ENCODE measurements at regions of chr5 and their contacts with region 1.

Region 1: GRCh38 chr5:36739751-36740221 is 133.4 kb downstream of the SLC1A3 start:
- DNase-seq: peak; percentile 68 to 95
- H3K4me3 ChIP-seq: no peak overlapping the region
- H3K27ac ChIP-seq: no peak overlapping the region
- H3K4me1 ChIP-seq: peaks cover 7 to 10% (median 9%) of the 10 kb centered on the region in 4 experiments; a peak in 6 of 7 replicates
- H3K27me3 ChIP-seq: no peaks in the 10 kb centered on the region
- CTCF ChIP-seq: peak; percentile 46 to 95 (median 91)
- EP300 ChIP-seq: no peak
- POLR2A ChIP-seq: no peak
- RAD21 ChIP-seq: peak; percentile 83 to 88

Region 2: GRCh38 chr5:36751886-36752285 is 12.1 kb after region 1 on chr5:
- CTCF ChIA-PET with region 1: interaction called, 43 read pairs
- POLR2A ChIA-PET with region 1: interaction called, 14 read pairs
- DNase-seq: no peak
- H3K4me3 ChIP-seq: no peak overlapping the region
- H3K27ac ChIP-seq: no peak overlapping the region
- H3K4me1 ChIP-seq: peaks cover 0 to 2% (median 0%) of the 10 kb centered on the region in 4 experiments; a peak in 2 of 7 replicates
- H3K27me3 ChIP-seq: no peaks in the 10 kb centered on the region
- CTCF ChIP-seq: peak; percentile 56 to 73 (median 70)
- EP300 ChIP-seq: no peak
- POLR2A ChIP-seq: no peak
- RAD21 ChIP-seq: peak; percentile 55 to 66

Region 3: DNA sequence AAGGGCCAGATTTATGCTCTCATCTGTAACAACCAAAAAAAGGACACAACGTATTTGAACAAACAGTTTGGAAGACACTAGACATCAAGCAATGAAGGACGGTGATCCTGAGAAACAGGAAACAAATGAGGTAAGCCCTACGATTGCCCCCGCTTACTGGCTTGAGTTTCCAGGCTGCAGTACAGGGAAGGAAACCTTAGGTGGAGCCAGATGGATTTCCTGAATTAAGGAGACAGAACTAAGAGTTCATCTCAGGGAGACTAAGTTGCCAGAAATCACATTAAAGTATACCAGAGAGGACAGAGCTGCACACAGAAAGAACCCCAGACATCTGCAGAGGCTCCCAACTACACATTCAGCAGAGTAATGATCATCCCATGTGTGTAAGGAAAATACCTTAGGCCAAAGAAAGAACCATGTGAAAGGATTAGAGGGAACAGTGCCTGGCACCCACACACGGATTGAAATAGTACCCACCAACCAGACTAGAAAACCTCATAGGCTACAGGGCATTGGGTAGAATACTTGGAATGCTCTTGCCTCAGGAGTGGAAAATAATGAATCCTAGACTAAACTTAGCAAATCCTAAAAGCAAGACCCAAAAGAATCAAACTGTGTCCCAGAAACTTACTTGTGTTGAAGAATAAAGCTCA is 37.4 kb after region 1 on chr5:
- CTCF ChIA-PET with region 1: interaction called, 13 read pairs
- POLR2A ChIA-PET with region 1: interaction called, 3 read pairs
- DNase-seq: peak in 1 of 2 experiments; percentile 5
- H3K4me3 ChIP-seq: no peak overlapping the region
- H3K27ac ChIP-seq: no peak overlapping the region
- H3K4me1 ChIP-seq: no peaks in the 10 kb centered on the region
- H3K27me3 ChIP-seq: no peaks in the 10 kb centered on the region
- CTCF ChIP-seq: peak; percentile 25 to 73 (median 56)
- EP300 ChIP-seq: no peak
- POLR2A ChIP-seq: no peak
- RAD21 ChIP-seq: peak; percentile 57 to 64

Region 4: DNA sequence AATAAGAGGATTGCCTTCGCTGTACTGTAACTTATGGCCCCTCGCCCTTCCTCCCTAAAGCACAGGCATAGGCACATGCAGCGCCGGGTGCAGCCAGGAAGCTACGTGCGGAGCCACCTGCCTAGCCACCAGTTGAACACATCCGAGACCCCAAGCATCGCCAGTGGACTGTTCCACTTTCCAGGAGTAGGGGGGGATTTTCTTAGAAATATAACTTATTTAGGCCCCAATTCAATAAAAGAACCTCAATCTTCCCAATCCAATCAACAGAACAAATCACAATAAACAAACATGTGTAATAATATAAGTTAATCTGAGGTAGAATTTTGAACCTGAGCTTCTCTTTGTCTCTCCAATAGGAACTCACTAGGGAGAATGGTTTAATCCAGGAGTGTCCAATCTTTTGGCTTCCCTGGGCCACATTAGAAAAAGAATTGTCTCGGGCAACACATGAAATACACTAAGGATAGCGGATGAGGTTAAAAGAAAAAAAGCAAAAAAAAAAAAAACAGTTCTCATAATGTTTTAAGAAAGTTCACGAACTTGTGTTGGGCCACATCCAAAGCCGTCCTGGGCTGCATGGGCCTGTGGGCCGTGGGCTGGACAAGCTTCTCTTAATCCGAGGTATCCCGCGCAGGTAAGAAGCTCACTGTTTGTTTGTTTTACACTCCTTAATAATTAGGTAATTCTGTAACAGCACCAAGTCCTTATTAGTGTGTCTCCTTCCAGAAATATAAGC is 114.8 kb after region 1 on chr5:
- CTCF ChIA-PET with region 1: interaction called, 22 read pairs
- POLR2A ChIA-PET with region 1: interaction called, 8 read pairs
- DNase-seq: no peak
- H3K4me3 ChIP-seq: peak overlapping the region in 1 of 4 experiments; percentile 6; a peak in 1 of 8 replicates
- H3K27ac ChIP-seq: no peak overlapping the region; the same call in 1 of the 2 replicates
- H3K4me1 ChIP-seq: 0 out of 7 replicates have a peak, but pooled peaks cover 0 to 4% (median 0%) of the 10 kb centered on the region in 4 experiments
- H3K27me3 ChIP-seq: no peaks in the 10 kb centered on the region
- CTCF ChIP-seq: no peak
- EP300 ChIP-seq: peak in 1 of 2 experiments; percentile 99; a peak in 2 of 3 replicates
- POLR2A ChIP-seq: no peak
- RAD21 ChIP-seq: no peak

Region 5: DNA sequence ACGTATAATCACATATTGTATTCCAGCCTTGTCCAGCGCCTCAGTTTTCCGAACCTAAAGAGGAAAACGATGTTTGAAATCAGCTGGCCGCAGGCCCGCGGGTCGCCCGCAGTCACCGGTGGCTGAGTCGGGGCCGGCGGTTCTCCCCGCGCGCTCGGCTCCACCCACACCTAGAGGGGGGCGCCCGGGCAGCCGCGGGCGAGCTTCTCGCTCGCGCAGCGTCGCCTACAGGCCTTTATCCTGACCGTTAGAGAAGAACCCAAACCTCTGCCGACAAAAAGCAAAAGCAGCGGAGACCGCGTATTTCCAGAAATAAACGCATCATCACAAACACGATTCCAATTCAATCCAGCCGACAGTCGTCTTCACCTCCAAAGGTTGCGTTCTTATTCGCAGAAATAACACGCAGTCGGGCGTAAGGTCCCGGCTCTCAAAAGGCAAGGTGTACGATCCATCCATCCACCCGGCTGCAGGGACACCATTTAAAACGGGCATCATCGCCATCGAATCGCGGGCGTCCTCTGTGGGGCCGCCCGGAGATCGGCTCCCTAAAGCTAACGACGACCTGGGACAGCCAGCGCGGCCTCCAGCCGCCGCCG is 136.1 kb after region 1 on chr5:
- CTCF ChIA-PET with region 1: interaction called, 121 read pairs
- POLR2A ChIA-PET with region 1: interaction called, 27 read pairs
- DNase-seq: peak in 1 of 2 experiments; percentile 68
- H3K4me3 ChIP-seq: peak overlapping the region; percentile 73 to 96 (median 94)
- H3K27ac ChIP-seq: peak overlapping the region; percentile 71
- H3K4me1 ChIP-seq: peaks cover 0 to 4% (median 0%) of the 10 kb centered on the region in 4 experiments; a peak in 3 of 7 replicates
- H3K27me3 ChIP-seq: no peaks in the 10 kb centered on the region
- CTCF ChIP-seq: peak; percentile 38 to 46 (median 44); a peak in 3 of 4 replicates
- EP300 ChIP-seq: no peak
- POLR2A ChIP-seq: no peak
- RAD21 ChIP-seq: peak; percentile 20 to 57

Region 6: GRCh38 chr5:37005946-37006540 is 266.3 kb after region 1 on chr5:
- CTCF ChIA-PET with region 1: interaction called, 19 read pairs
- POLR2A ChIA-PET with region 1: no interaction called
- DNase-seq: no peak
- H3K4me3 ChIP-seq: no peak overlapping the region
- H3K27ac ChIP-seq: no peak overlapping the region
- H3K4me1 ChIP-seq: no peaks in the 10 kb centered on the region
- H3K27me3 ChIP-seq: no peaks in the 10 kb centered on the region
- CTCF ChIP-seq: peak in 1 of 3 experiments; percentile 59; a peak in 2 of 4 replicates
- EP300 ChIP-seq: no peak
- POLR2A ChIP-seq: no peak
- RAD21 ChIP-seq: peak in 1 of 2 experiments; percentile 52; a peak in 3 of 4 replicates

Region 7: GRCh38 chr5:37060030-37060429 is 320.2 kb after region 1 on chr5:
- CTCF ChIA-PET with region 1: no interaction called
- POLR2A ChIA-PET with region 1: no interaction called
- DNase-seq: no peak
- H3K4me3 ChIP-seq: no peak overlapping the region
- H3K27ac ChIP-seq: no peak overlapping the region
- H3K4me1 ChIP-seq: no peaks in the 10 kb centered on the region
- H3K27me3 ChIP-seq: no peaks in the 10 kb centered on the region
- CTCF ChIP-seq: no peak
- EP300 ChIP-seq: no peak
- POLR2A ChIP-seq: no peak
- RAD21 ChIP-seq: no peak